Natural killer cell (primary cell): ENCODE measurements at regions of chrX and their contacts with region 1.

Region 1: DNA sequence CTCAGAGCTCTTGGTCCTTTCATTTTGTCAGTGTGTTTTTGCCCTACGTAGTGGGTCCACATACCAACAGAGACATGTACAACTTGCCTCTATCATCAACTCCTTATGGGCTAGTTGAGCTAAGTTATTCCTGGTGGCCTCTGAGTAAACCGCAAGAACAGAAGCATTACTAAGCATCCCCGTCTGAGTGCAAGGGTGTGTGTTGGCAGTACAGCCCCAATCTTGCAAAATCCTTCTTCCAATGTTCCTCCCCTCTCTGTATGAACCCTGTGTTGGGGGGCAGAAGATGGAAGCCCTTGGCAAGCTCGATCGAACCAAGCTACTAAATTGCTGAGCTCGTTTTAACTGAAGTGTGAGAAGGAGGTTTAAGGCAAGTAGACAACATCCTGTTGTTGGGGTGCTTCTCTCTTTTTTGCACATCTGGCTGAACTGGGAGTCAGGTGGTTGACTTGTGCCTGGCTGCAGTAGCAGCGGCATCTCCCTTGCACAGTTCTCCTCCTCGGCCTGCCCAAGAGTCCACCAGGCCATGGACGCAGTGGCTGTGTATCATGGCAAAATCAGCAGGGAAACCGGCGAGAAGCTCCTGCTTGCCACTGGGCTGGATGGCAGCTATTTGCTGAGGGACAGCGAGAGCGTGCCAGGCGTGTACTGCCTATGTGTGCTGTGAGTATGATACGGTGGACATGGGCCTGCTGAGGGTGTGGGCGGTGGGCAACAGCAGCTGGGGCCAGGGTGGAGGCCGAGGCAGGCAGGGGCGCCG is at the start of gene SH2D1A:
- DNase-seq: peak; percentile 35 to 70
- ATAC-seq: peak; percentile 40 to 69 (median 60)
- H3K4me3 ChIP-seq: peak within 1 kb of the TSS; percentile 63
- H3K4me3 Mint-ChIP-seq: peak within 1 kb of the TSS; percentile 83
- H3K27ac ChIP-seq: peak within 1 kb of the TSS; percentile 85
- H3K27ac Mint-ChIP-seq: peak within 1 kb of the TSS; percentile 94 to 95
- H3K4me1 ChIP-seq: peaks cover 15% of the 10 kb centered on the region
- H3K4me1 Mint-ChIP-seq: peaks cover 54 to 60% of the 10 kb centered on the region in 2 donors
- H3K27me3 ChIP-seq: no peaks in the 10 kb centered on the region
- H3K27me3 Mint-ChIP-seq: no peaks in the 10 kb centered on the region
- CTCF ChIP-seq: no peak
- total RNA-seq, gene SH2D1A: 58.4 to 73.6 (median 62.2) TPM

Region 2: DNA sequence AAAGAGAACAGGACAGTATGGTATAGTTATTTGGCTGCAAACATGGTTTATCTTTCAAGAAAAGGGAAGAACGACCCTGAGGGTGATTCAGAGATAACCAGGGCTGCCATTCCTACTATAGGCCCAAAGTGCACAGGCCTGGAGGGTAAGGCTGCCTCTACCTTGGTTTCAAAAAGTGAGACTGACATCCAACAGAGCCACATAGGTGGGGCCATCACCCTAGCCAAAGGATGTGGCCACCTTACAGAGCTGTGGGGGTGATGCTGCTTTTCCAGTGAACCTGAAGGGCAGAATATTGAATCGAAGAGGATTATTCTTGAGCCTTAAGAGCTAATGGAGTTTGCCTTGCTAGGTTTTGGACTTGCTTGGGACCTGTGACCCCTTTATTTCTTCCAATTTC is 15.8 kb after region 1 on chrX:
- intact Hi-C with region 1: loop called (anchors 2 kb)
- DNase-seq: no peak
- ATAC-seq: peak in 2 of 3 donors; percentile 35 to 69
- H3K4me3 ChIP-seq: no peak overlapping the region
- H3K4me3 Mint-ChIP-seq: peak overlapping the region; percentile 70
- H3K27ac ChIP-seq: peak overlapping the region; percentile 28
- H3K27ac Mint-ChIP-seq: peak overlapping the region; percentile 86 to 88
- H3K4me1 ChIP-seq: peaks cover 17% of the 10 kb centered on the region
- H3K4me1 Mint-ChIP-seq: peaks cover 45 to 49% of the 10 kb centered on the region in 2 donors
- H3K27me3 ChIP-seq: no peaks in the 10 kb centered on the region
- H3K27me3 Mint-ChIP-seq: no peaks in the 10 kb centered on the region
- CTCF ChIP-seq: no peak

Region 3: GRCh38 chrX:124435616-124436015 is 89.3 kb after region 1 on chrX:
- intact Hi-C with region 1: no loop called
- DNase-seq: no peak
- ATAC-seq: no peak
- H3K4me3 ChIP-seq: no peak overlapping the region
- H3K4me3 Mint-ChIP-seq: no peak overlapping the region
- H3K27ac ChIP-seq: no peak overlapping the region
- H3K27ac Mint-ChIP-seq: no peak overlapping the region
- H3K4me1 ChIP-seq: no peaks in the 10 kb centered on the region
- H3K4me1 Mint-ChIP-seq: no peaks in the 10 kb centered on the region
- H3K27me3 ChIP-seq: no peaks in the 10 kb centered on the region
- H3K27me3 Mint-ChIP-seq: no peaks in the 10 kb centered on the region
- CTCF ChIP-seq: no peak